ENCODE measurements at regions of chr3 and their contacts with region 1.

Region 1: GRCh38 chr3:129934234-129935123 is 40.0 kb upstream of the TRH start:
- DNase-seq: peak in 1 of 5 donors; percentile 24
- ATAC-seq: peak in 3 of 4 donors; percentile 47 to 62 (median 58)
- H3K4me3 ChIP-seq: peak overlapping the region in 7 of 12 donors; percentile 11 to 41 (median 26)
- H3K27ac ChIP-seq: no peak overlapping the region
- H3K4me1 ChIP-seq: peaks cover 0 to 9% (median 0%) of the 10 kb centered on the region in 12 donors
- H3K27me3 ChIP-seq: no peaks in the 10 kb centered on the region
- CTCF ChIP-seq: peak; percentile 86 to 96 (median 92)
- POLR2A ChIP-seq: no peak

Region 2: GRCh38 chr3:129383292-129383860 is 551.1 kb before region 1 on chr3:
- intact Hi-C with region 1: loop called in 5 of 10 experiments (anchors 5 to 10 kb)
- DNase-seq: peak in 4 of 5 donors; percentile 50 to 64 (median 62)
- ATAC-seq: peak; percentile 77 to 89 (median 89)
- H3K4me3 ChIP-seq: no peak overlapping the region
- H3K27ac ChIP-seq: peak overlapping the region in 1 of 12 donors; percentile 7
- H3K4me1 ChIP-seq: peaks cover 0 to 19% (median 4%) of the 10 kb centered on the region in 12 donors
- H3K27me3 ChIP-seq: no peaks in the 10 kb centered on the region
- CTCF ChIP-seq: peak; percentile 58 to 84 (median 74)
- POLR2A ChIP-seq: no peak

Region 3: DNA sequence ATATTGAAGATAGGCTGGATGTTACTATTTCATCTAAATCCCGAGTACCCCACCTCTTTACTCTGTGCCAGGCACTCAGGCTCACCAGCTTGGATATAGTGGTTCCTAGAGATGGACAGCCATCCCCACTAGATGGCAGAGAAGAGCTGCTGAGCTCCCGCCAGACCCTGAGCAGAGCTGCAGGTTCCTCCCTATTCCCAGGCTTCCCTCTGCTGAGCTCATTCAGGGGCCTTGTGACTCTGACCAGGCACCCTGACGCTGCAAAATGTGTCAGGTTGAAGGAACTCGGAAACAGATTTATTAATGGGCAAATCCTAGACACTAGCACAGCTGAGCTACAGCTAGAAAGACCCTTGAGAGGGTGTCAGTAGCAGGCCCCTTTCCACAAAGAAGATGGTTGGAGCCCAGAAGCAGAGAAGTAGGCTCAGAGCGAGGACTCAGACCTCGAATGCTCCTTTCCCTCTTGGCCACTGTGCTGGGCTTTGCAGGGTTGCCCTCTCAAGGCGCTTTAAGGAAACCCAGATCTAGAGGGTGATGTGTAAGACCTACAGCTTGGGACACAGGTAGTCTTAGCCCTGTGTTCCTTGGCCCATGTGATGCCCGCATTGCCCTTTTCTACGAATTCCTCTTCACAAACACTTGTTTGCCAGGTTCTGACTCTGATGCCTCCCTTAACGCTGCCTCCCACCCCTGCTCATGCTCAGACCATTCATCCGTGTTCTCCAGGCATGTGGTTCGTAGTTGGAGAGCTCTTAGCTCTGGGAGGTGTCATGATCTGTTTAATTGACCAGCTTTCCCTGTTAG is 444.0 kb before region 1 on chr3:
- intact Hi-C with region 1: loop called in 7 of 10 experiments (anchors 5 to 10 kb)
- DNase-seq: peak; percentile 87 to 89 (median 88)
- ATAC-seq: peak; percentile 88 to 93 (median 90)
- H3K4me3 ChIP-seq: no peak overlapping the region
- H3K27ac ChIP-seq: peak overlapping the region in 11 of 12 donors; percentile 48 to 89 (median 74)
- H3K4me1 ChIP-seq: peaks cover 3 to 59% (median 29%) of the 10 kb centered on the region in 12 donors
- H3K27me3 ChIP-seq: no peaks in the 10 kb centered on the region
- CTCF ChIP-seq: peak; percentile 84 to 97 (median 92)
- POLR2A ChIP-seq: peak in 1 of 2 donors; percentile 31

Region 4: GRCh38 chr3:129633751-129634392 is 300.6 kb before region 1 on chr3:
- intact Hi-C with region 1: loop called in 7 of 10 experiments (anchors 2 to 5 kb)
- DNase-seq: no peak
- ATAC-seq: no peak
- H3K4me3 ChIP-seq: no peak overlapping the region
- H3K27ac ChIP-seq: no peak overlapping the region
- H3K4me1 ChIP-seq: peaks cover 0 to under 1% (median 0%) of the 10 kb centered on the region in 12 donors
- H3K27me3 ChIP-seq: no peaks in the 10 kb centered on the region
- CTCF ChIP-seq: no peak
- POLR2A ChIP-seq: no peak

Region 5: DNA sequence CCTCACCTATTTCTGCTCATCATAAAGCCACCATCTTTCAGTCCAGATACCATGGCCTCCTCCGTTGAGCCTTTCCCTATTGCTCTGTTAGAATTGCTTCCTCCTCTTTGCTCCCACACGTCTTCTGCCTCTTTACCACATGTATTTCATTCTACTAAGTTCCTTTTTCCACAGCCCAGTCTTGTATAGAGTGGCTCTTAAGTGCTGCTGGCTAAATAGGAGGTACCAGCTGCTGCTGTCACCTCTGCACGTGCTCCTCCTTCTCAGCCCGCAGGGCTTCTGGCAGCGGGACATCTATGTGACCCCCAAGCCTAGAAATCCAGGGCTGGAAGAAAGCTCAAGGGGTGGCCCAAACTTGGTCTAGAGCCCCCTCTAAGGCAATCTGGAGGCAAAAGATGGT is 289.2 kb before region 1 on chr3:
- intact Hi-C with region 1: loop called in 8 of 10 experiments (anchors 1 to 5 kb)
- DNase-seq: no peak
- ATAC-seq: no peak
- H3K4me3 ChIP-seq: no peak overlapping the region
- H3K27ac ChIP-seq: no peak overlapping the region
- H3K4me1 ChIP-seq: peaks cover 0 to 9% (median 0%) of the 10 kb centered on the region in 12 donors
- H3K27me3 ChIP-seq: no peaks in the 10 kb centered on the region
- CTCF ChIP-seq: no peak
- POLR2A ChIP-seq: no peak

Region 6: GRCh38 chr3:129650256-129650872 is 284.1 kb before region 1 on chr3:
- intact Hi-C with region 1: loop called in 8 of 10 experiments (anchors 1 to 5 kb)
- DNase-seq: peak in 4 of 5 donors; percentile 45 to 73 (median 64)
- ATAC-seq: peak in 3 of 4 donors; percentile 68 to 84 (median 80)
- H3K4me3 ChIP-seq: no peak overlapping the region
- H3K27ac ChIP-seq: no peak overlapping the region
- H3K4me1 ChIP-seq: peaks cover 0 to 27% (median 15%) of the 10 kb centered on the region in 12 donors
- H3K27me3 ChIP-seq: no peaks in the 10 kb centered on the region
- CTCF ChIP-seq: peak; percentile 47 to 82 (median 74)
- POLR2A ChIP-seq: no peak

Region 7: DNA sequence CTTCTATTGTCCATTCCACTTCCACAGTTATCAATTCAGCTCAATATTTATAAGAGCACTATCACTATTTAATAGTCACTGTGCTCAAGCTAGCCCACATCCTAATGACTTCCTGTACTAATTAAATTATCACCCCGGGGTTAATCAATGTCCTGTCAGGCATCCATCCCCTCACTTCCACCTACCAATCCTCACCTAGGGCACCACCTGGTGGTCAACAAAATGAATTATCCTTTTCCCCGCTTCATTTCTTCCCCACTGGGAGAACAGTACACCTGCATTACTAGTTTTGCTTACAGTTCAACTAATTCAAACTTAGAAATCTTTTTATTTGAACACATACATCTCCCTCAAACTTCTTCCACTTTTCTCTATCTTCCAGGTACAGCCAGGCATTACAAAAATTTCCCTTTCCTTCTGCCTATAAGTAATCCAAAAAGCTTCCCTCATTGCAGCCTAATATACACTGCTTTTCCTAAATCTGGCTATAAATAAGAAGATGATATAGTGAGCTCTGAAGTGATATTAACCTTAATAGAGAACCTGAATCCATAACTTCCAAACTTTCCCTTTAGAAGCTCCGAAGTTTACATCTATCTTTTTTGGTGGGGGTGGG is 109.4 kb before region 1 on chr3:
- intact Hi-C with region 1: loop called in 8 of 10 experiments (anchors 5 to 10 kb)
- DNase-seq: peak in 2 of 5 donors; percentile 28 to 46
- ATAC-seq: peak in 3 of 4 donors; percentile 51 to 60 (median 54)
- H3K4me3 ChIP-seq: no peak overlapping the region
- H3K27ac ChIP-seq: no peak overlapping the region
- H3K4me1 ChIP-seq: peaks cover 0 to 62% (median 4%) of the 10 kb centered on the region in 12 donors
- H3K27me3 ChIP-seq: no peaks in the 10 kb centered on the region
- CTCF ChIP-seq: peak; percentile 61 to 80 (median 71)
- POLR2A ChIP-seq: no peak

Measured in heart left ventricle (tissue), 16 donors.